ENCODE measurements at regions of chr1 and their contacts with region 1.

Region 1: GRCh38 chr1:71269818-71270217 is 189.0 kb upstream of the ZRANB2 start:
- DNase-seq: no peak
- ATAC-seq: no peak
- H3K4me3 ChIP-seq: no peak overlapping the region
- H3K4me3 Mint-ChIP-seq: no peak overlapping the region
- H3K27ac ChIP-seq: no peak overlapping the region
- H3K27ac Mint-ChIP-seq: no peak overlapping the region
- H3K4me1 ChIP-seq: no peaks in the 10 kb centered on the region
- H3K4me1 Mint-ChIP-seq: no peaks in the 10 kb centered on the region
- H3K27me3 ChIP-seq: no peaks in the 10 kb centered on the region
- H3K27me3 Mint-ChIP-seq: no peaks in the 10 kb centered on the region

Region 2: DNA sequence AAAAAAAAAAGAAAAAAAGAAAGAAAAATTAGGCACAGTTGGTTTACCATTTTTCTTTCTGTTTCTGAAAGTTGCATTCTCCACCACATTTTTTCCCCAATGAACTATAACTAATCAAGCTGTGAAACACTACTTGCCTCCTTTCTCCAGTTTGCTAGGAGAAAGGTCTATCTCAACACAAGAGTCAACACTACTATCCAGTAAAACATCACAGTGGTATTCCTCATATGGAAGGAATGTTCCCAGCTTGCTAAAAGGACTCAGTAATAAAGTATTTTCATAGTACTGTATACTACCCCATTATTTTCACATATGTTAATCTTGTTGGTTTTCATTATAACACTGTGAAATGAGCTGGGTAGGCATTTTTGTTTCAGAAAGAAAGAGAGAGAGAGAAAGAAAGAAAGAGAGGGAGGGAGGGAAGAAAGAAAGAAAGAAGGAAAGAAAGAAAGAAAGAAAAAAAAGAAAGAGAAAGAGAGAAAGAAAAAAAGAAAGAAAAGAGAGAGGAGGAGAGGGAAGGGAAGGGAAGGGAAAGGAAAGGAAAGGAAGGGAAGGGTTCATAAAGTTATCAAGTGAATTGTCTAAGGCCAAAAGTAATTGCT is 230.1 kb before region 1 on chr1:
- CTCF ChIA-PET with region 1: no interaction called
- POLR2A ChIA-PET with region 1: no interaction called
- DNase-seq: no peak
- ATAC-seq: no peak
- H3K4me3 ChIP-seq: no peak overlapping the region
- H3K4me3 Mint-ChIP-seq: no peak overlapping the region
- H3K27ac ChIP-seq: no peak overlapping the region
- H3K27ac Mint-ChIP-seq: no peak overlapping the region
- H3K4me1 ChIP-seq: no peaks in the 10 kb centered on the region
- H3K4me1 Mint-ChIP-seq: no peaks in the 10 kb centered on the region
- H3K27me3 ChIP-seq: peaks cover 0 to 7% of the 10 kb centered on the region in 2 experiments
- H3K27me3 Mint-ChIP-seq: peaks cover 32 to 34% of the 10 kb centered on the region in 2 donors

Region 3: DNA sequence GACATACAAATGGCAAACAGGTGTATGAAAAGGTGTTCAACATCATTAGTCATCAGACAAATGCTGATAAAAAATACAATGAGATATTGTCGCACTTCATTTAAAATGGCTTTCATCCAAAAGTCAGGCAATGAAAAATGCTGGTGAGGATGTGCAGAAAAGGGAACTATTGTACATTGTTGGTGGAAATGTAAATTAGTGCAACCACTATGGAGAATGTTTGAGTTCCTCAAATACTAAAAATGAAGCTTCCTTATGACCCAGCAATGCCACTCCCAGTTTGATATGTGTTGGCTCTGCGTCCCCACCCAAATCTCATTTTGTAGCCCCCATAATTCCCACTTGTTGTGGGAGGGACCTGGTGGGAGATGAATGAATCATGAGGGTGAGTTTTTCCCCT is 120.7 kb after region 1 on chr1:
- CTCF ChIA-PET with region 1: interaction called in 1 of 2 experiments, 10 read pairs
- POLR2A ChIA-PET with region 1: no interaction called
- DNase-seq: no peak
- ATAC-seq: no peak
- H3K4me3 ChIP-seq: no peak overlapping the region
- H3K4me3 Mint-ChIP-seq: no peak overlapping the region
- H3K27ac ChIP-seq: no peak overlapping the region
- H3K27ac Mint-ChIP-seq: no peak overlapping the region
- H3K4me1 ChIP-seq: no peaks in the 10 kb centered on the region
- H3K4me1 Mint-ChIP-seq: no peaks in the 10 kb centered on the region
- H3K27me3 ChIP-seq: no peaks in the 10 kb centered on the region
- H3K27me3 Mint-ChIP-seq: no peaks in the 10 kb centered on the region

Measured in T-cell (primary cell).